ENCODE measurements at regions of chr17 and their contacts with region 1.

Region 1: GRCh38 chr17:60720763-60721531 is 43.3 kb downstream of the BCAS3 start:
- DNase-seq: peak; percentile 60
- ATAC-seq: peak; percentile 90
- H3K4me3 ChIP-seq: no peak overlapping the region
- H3K27ac ChIP-seq: no peak overlapping the region
- H3K4me1 ChIP-seq: no peaks in the 10 kb centered on the region
- H3K27me3 ChIP-seq: no peaks in the 10 kb centered on the region
- CTCF ChIP-seq: peak; percentile 86 to 99 (median 96)
- POLR2A ChIP-seq: no peak
- RAD21 ChIP-seq: peak; percentile 92

Region 2: GRCh38 chr17:60577147-60577915 is 143.6 kb before region 1 on chr17:
- CTCF ChIA-PET with region 1: no interaction called
- POLR2A ChIA-PET with region 1: no interaction called
- RAD21 ChIA-PET with region 1: no interaction called
- intact Hi-C with region 1: no loop called
- DNase-seq: no peak
- ATAC-seq: peak; percentile 70
- H3K4me3 ChIP-seq: no peak overlapping the region
- H3K27ac ChIP-seq: no peak overlapping the region
- H3K4me1 ChIP-seq: no peaks in the 10 kb centered on the region
- H3K27me3 ChIP-seq: no peaks in the 10 kb centered on the region
- CTCF ChIP-seq: peak in 2 of 3 experiments; percentile 11 to 33; a peak in 1 of 6 replicates
- POLR2A ChIP-seq: no peak
- RAD21 ChIP-seq: peak; percentile 48

Region 3: DNA sequence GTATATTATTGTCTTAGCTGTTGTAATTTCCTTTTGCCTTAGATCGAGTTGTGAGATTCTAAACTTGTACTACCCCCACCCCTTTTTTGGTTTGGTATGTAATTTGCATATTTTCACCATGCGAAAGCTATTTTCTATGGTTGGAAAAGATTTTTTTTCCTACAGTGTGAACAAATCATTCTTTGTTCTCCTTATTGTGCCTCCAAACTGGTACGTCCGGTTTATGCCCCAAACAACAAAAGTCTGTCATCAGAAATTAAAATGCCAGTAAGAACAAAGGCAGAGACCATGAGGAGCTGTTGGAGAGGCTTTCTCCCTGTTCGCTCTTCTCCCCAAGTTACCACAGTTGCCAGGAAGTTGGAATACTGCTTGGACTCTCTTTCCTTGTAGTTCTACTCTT is 22.9 kb after region 1 on chr17:
- CTCF ChIA-PET with region 1: interaction called, 26 read pairs
- POLR2A ChIA-PET with region 1: no interaction called
- RAD21 ChIA-PET with region 1: no interaction called
- intact Hi-C with region 1: no loop called
- DNase-seq: peak; percentile 28
- ATAC-seq: peak; percentile 54; the same call in 1 of the 2 replicates
- H3K4me3 ChIP-seq: no peak overlapping the region
- H3K27ac ChIP-seq: peak overlapping the region; percentile 17; the same call in 1 of the 2 replicates
- H3K4me1 ChIP-seq: peaks cover 11 to 17% of the 10 kb centered on the region in 2 experiments
- H3K27me3 ChIP-seq: no peaks in the 10 kb centered on the region
- CTCF ChIP-seq: no peak
- POLR2A ChIP-seq: no peak
- RAD21 ChIP-seq: 0 out of 2 replicates have a peak, but pooled peaks have one; percentile 2

Region 4: GRCh38 chr17:60802377-60802776 is 81.4 kb after region 1 on chr17:
- CTCF ChIA-PET with region 1: no interaction called
- POLR2A ChIA-PET with region 1: no interaction called
- RAD21 ChIA-PET with region 1: no interaction called
- intact Hi-C with region 1: no loop called
- DNase-seq: no peak
- ATAC-seq: no peak
- H3K4me3 ChIP-seq: no peak overlapping the region
- H3K27ac ChIP-seq: no peak overlapping the region
- H3K4me1 ChIP-seq: no peaks in the 10 kb centered on the region
- H3K27me3 ChIP-seq: no peaks in the 10 kb centered on the region
- CTCF ChIP-seq: no peak
- POLR2A ChIP-seq: no peak
- RAD21 ChIP-seq: no peak

Region 5: GRCh38 chr17:61002316-61002736 is 281.4 kb after region 1 on chr17:
- CTCF ChIA-PET with region 1: interaction called, 8 read pairs
- POLR2A ChIA-PET with region 1: no interaction called
- RAD21 ChIA-PET with region 1: no interaction called
- intact Hi-C with region 1: loop called (anchors 5 kb)
- DNase-seq: peak; percentile 26
- ATAC-seq: peak; percentile 69
- H3K4me3 ChIP-seq: no peak overlapping the region
- H3K27ac ChIP-seq: no peak overlapping the region
- H3K4me1 ChIP-seq: no peaks in the 10 kb centered on the region
- H3K27me3 ChIP-seq: no peaks in the 10 kb centered on the region
- CTCF ChIP-seq: peak; percentile 49 to 88 (median 77); a peak in 5 of 6 replicates
- POLR2A ChIP-seq: no peak
- RAD21 ChIP-seq: peak; percentile 88

Region 6: GRCh38 chr17:61389670-61390478 is 668.9 kb after region 1 on chr17:
- CTCF ChIA-PET with region 1: interaction called, 14 read pairs
- POLR2A ChIA-PET with region 1: no interaction called
- RAD21 ChIA-PET with region 1: interaction called in 1 of 2 experiments, 3 read pairs
- intact Hi-C with region 1: loop called (anchors 1 kb)
- DNase-seq: no peak
- ATAC-seq: peak; percentile 84
- H3K4me3 ChIP-seq: no peak overlapping the region
- H3K27ac ChIP-seq: no peak overlapping the region
- H3K4me1 ChIP-seq: peaks cover 12 to 17% of the 10 kb centered on the region in 2 experiments; a peak in 3 of 4 replicates
- H3K27me3 ChIP-seq: no peaks in the 10 kb centered on the region
- CTCF ChIP-seq: peak; percentile 83 to 100 (median 100)
- POLR2A ChIP-seq: no peak
- RAD21 ChIP-seq: peak; percentile 94

Region 7: GRCh38 chr17:61574542-61575174 is 853.7 kb after region 1 on chr17:
- CTCF ChIA-PET with region 1: interaction called, 8 read pairs
- POLR2A ChIA-PET with region 1: no interaction called
- RAD21 ChIA-PET with region 1: no interaction called
- intact Hi-C with region 1: loop called (anchors 10 kb)
- DNase-seq: peak; percentile 74
- ATAC-seq: peak; percentile 92
- H3K4me3 ChIP-seq: peak overlapping the region in 1 of 2 experiments; percentile 6; a peak in 2 of 4 replicates
- H3K27ac ChIP-seq: peak overlapping the region; percentile 66
- H3K4me1 ChIP-seq: peaks cover 28 to 41% of the 10 kb centered on the region in 2 experiments
- H3K27me3 ChIP-seq: no peaks in the 10 kb centered on the region
- CTCF ChIP-seq: peak; percentile 57 to 89 (median 67)
- POLR2A ChIP-seq: no peak
- RAD21 ChIP-seq: peak; percentile 96